ENCODE measurements at regions of chr5 and their contacts with region 1.

Region 1: GRCh38 chr5:43484106-43484849 is 613 bp upstream of the TMEM267 start:
- DNase-seq: peak; percentile 91
- H3K4me3 Mint-ChIP-seq: peak overlapping the region; percentile 92
- H3K27ac Mint-ChIP-seq: peak overlapping the region; percentile 99
- H3K4me1 Mint-ChIP-seq: peaks cover 46% of the 10 kb centered on the region
- H3K27me3 Mint-ChIP-seq: peaks cover 3% of the 10 kb centered on the region

Region 2: DNA sequence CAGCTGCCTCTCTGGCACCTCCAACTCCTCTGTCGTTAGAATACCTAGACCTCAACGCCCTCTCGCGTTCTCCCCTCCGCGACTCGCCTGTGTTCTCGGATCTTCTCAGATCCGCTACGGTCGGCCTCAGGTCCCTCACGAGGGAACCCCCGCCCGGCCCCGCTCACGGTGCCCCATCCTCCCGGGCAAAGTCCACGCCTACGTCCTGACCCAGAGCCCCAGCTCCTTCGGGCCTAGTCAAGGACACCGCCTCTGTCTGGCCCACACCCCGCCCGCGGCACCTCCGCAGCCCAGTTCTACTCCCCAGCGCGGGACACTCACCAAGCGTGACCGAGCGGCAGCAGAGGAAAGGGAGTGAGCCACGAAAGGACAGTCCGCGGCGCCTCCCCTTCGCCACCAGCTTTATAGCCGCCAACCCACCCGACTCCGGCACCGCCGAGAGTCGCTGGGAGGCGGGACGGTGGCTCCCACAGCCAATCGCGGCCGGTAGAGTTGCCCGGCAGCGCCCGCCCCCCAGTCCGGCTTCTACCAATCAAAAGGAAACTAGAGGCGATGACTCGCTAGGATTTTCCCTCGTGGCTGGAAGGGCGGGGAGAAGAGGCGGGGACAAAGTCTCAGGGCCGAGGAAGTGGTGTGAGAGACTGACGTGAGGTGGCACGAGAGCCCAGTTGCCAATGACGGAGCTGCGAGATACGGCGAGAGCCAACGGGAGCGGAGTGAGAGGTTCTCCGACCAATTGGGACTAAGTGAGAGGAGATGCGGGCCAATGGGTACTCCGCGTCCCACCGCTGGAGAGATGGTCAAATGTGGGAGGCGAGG is 171.0 kb before region 1 on chr5 and contains the start of gene HMGCS1:
- CTCF ChIA-PET with region 1: interaction called, 15 read pairs
- DNase-seq: peak; percentile 100
- H3K4me3 Mint-ChIP-seq: peak within 1 kb of the TSS; percentile 99
- H3K27ac Mint-ChIP-seq: peak within 1 kb of the TSS; percentile 90
- H3K4me1 Mint-ChIP-seq: peaks cover 61% of the 10 kb centered on the region
- H3K27me3 Mint-ChIP-seq: no peaks in the 10 kb centered on the region

Region 3: DNA sequence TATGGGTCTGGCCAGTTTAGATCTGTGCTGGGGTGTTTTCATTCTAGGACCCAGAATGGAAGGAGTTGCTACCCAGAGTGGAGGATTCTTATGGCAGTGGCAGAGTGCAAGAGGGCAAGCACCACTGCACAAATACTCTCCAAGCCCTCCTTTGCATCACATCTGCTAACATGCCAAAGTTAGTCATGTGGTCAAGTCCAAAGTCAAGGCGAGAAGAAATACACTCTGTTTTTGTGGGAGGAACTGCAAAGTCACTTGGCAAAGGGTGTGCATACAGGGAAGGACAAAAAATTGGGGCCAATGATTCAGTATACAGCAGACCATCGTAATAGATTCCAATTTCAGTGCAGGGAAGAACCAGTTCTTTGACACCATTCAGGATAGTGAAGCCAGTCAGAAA is 127.2 kb before region 1 on chr5:
- CTCF ChIA-PET with region 1: no interaction called
- DNase-seq: no peak
- H3K4me3 Mint-ChIP-seq: no peak overlapping the region
- H3K27ac Mint-ChIP-seq: no peak overlapping the region
- H3K4me1 Mint-ChIP-seq: no peaks in the 10 kb centered on the region
- H3K27me3 Mint-ChIP-seq: no peaks in the 10 kb centered on the region

Measured in activated naive CD4-positive, alpha-beta T cell treated with anti-CD3 and anti-CD28 coated beads, Interleukin-2, amount 10 ng/mL, durations not matched to agents 7 days and 5 days (primary cell).